Heart right ventricle (tissue), 16 donors: ENCODE measurements at regions of chr18 and their contacts with region 1.

Region 1: DNA sequence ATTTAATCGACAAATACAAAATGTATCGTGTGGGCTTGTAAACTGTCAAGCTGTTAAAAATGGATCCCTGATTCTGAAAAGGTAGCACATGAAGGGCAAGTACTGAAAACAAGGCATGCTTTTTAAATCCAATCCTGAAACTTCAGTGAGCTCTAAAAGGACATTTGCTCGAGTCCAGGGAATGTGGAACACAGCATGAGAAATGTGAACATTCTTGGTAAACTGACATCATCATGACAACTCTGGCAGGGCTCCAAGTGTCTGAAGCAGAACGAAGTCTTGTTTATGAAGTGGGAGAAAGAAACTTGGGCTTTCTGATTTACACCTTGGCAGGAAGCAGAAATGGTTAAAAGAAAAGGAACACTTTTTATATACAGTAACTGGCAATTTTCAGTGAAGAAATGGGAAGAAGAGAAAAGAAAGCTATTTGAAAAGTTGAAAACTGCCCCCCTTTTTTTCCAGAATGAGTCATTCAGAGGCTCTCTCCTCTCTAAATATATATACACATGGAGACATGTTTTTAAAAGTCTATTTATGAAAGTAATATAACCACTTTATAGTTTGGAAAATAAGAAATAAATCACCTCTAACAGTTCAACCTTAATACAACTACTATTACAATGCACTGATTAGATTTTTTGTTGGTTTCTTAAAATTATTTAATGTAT is 120.8 kb downstream of the GAREM1 start:
- DNase-seq: peak in 1 of 2 donors; percentile 85
- ATAC-seq: peak in 7 of 8 donors; percentile 72 to 85 (median 80)
- H3K4me3 ChIP-seq: peak overlapping the region in 2 of 10 donors; percentile 11 to 12
- H3K27ac ChIP-seq: peak overlapping the region; percentile 47 to 83 (median 66)
- H3K4me1 ChIP-seq: peaks cover 0 to 53% (median 29%) of the 10 kb centered on the region in 9 donors
- H3K27me3 ChIP-seq: no peaks in the 10 kb centered on the region
- CTCF ChIP-seq: no peak

Region 2: DNA sequence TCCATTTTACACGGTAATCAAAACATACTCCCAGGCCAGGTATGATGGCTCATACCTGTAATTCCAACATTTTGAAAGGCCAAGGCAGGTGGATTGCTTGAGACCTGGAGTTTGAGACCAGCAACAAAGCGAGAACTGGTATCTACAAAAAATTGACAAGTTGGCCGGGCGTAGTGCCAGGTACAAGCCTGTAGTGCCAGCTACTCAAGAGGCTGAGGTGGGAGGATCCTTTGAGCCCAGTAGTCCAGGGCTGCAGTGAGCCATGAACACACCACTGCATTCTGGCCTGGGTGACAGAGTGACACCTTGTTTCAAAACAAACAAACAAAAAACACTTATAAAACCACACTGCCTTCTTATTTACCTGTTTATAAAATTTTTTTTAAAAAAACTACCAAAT is 40.0 kb after region 1 on chr18:
- intact Hi-C with region 1: no loop called
- DNase-seq: peak; percentile 59 to 64
- ATAC-seq: peak in 7 of 8 donors; percentile 61 to 87 (median 84)
- H3K4me3 ChIP-seq: no peak overlapping the region
- H3K27ac ChIP-seq: no peak overlapping the region
- H3K4me1 ChIP-seq: peaks cover 0 to 26% (median 15%) of the 10 kb centered on the region in 9 donors
- H3K27me3 ChIP-seq: no peaks in the 10 kb centered on the region
- CTCF ChIP-seq: no peak

Region 3: GRCh38 chr18:32424696-32425095 is 74.8 kb after region 1 on chr18:
- intact Hi-C with region 1: loop called in 1 of 10 experiments (anchors 5 kb)
- DNase-seq: no peak
- ATAC-seq: peak in 7 of 8 donors; percentile 55 to 88 (median 76)
- H3K4me3 ChIP-seq: no peak overlapping the region
- H3K27ac ChIP-seq: peak overlapping the region in 8 of 10 donors; percentile 23 to 59 (median 34)
- H3K4me1 ChIP-seq: peaks cover 0 to 90% (median 55%) of the 10 kb centered on the region in 9 donors
- H3K27me3 ChIP-seq: no peaks in the 10 kb centered on the region
- CTCF ChIP-seq: no peak

Region 4: GRCh38 chr18:32439802-32440201 is 89.9 kb after region 1 on chr18:
- intact Hi-C with region 1: loop called in 1 of 10 experiments (anchors 5 kb)
- DNase-seq: no peak
- ATAC-seq: no peak
- H3K4me3 ChIP-seq: no peak overlapping the region
- H3K27ac ChIP-seq: peak overlapping the region in 2 of 10 donors; percentile 30 to 76
- H3K4me1 ChIP-seq: peaks cover 2 to 92% (median 49%) of the 10 kb centered on the region in 9 donors
- H3K27me3 ChIP-seq: no peaks in the 10 kb centered on the region
- CTCF ChIP-seq: peak in 4 of 9 donors; percentile 20 to 43 (median 27)